A549 (cell line): ENCODE measurements at regions of chr13 and their contacts with region 1.

Region 1: GRCh38 chr13:19573120-19573716 is 11.9 kb upstream of the TPTE2 start:
- DNase-seq: no peak
- ATAC-seq: no peak
- H3K4me3 ChIP-seq: no peak overlapping the region
- H3K27ac ChIP-seq: no peak overlapping the region
- H3K4me1 ChIP-seq: no peaks in the 10 kb centered on the region
- CTCF ChIP-seq: no peak
- EP300 ChIP-seq: no peak
- POLR2A ChIP-seq: no peak
- RAD21 ChIP-seq: no peak

Region 2: DNA sequence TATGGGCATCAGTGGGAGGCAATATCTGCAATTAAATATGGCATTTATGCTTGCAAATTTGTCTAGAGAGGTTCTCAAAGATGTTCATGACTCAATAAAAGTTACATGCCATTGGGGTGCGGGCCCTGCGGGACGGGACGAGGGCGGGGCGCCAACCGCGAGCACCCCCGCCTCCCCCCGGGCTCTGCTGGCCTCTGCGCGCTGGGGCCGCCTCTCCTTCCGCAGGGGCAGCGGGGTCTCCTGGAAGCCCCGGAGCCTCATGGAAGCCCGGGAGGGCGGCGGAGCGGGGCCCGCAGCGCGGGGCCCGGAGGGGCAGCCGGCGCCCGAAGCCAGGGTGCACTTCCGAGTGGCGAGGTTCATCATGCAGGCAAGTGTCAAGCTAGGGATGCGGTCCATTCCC is 191.1 kb before region 1 on chr13:
- CTCF ChIA-PET with region 1: no interaction called
- POLR2A ChIA-PET with region 1: no interaction called
- DNase-seq: no peak
- ATAC-seq: no peak
- H3K4me3 ChIP-seq: no peak overlapping the region
- H3K27ac ChIP-seq: no peak overlapping the region
- H3K4me1 ChIP-seq: no peaks in the 10 kb centered on the region
- CTCF ChIP-seq: no peak
- EP300 ChIP-seq: no peak
- POLR2A ChIP-seq: no peak
- RAD21 ChIP-seq: no peak

Region 3: GRCh38 chr13:19561585-19561984 is 11.6 kb before region 1 on chr13:
- CTCF ChIA-PET with region 1: no interaction called
- POLR2A ChIA-PET with region 1: no interaction called
- DNase-seq: no peak
- ATAC-seq: no peak
- H3K4me3 ChIP-seq: no peak overlapping the region
- H3K27ac ChIP-seq: no peak overlapping the region
- H3K4me1 ChIP-seq: no peaks in the 10 kb centered on the region
- CTCF ChIP-seq: no peak
- EP300 ChIP-seq: no peak
- POLR2A ChIP-seq: no peak
- RAD21 ChIP-seq: no peak

Region 4: GRCh38 chr13:19587635-19588300 is 14.6 kb after region 1 on chr13:
- CTCF ChIA-PET with region 1: interaction called, 11 read pairs
- POLR2A ChIA-PET with region 1: no interaction called
- DNase-seq: peak; percentile 18 to 74
- ATAC-seq: peak; percentile 98 to 100
- H3K4me3 ChIP-seq: no peak overlapping the region
- H3K27ac ChIP-seq: no peak overlapping the region
- H3K4me1 ChIP-seq: no peaks in the 10 kb centered on the region
- CTCF ChIP-seq: peak; percentile 81
- EP300 ChIP-seq: no peak
- POLR2A ChIP-seq: no peak
- RAD21 ChIP-seq: peak; percentile 79 to 83